ENCODE measurements at regions of chr17 and their contacts with region 1.

Region 1: GRCh38 chr17:7687908-7688807 is at the start of gene WRAP53:
- DNase-seq: peak; percentile 98
- ATAC-seq: peak; percentile 85
- H3K4me3 Mint-ChIP-seq: peak within 1 kb of the TSS; percentile 99
- H3K27ac Mint-ChIP-seq: peak within 1 kb of the TSS; percentile 100
- H3K4me1 Mint-ChIP-seq: peaks cover 25% of the 10 kb centered on the region
- H3K27me3 Mint-ChIP-seq: no peaks in the 10 kb centered on the region
- total RNA-seq, gene WRAP53: 19.3 to 19.4 TPM

Region 2: DNA sequence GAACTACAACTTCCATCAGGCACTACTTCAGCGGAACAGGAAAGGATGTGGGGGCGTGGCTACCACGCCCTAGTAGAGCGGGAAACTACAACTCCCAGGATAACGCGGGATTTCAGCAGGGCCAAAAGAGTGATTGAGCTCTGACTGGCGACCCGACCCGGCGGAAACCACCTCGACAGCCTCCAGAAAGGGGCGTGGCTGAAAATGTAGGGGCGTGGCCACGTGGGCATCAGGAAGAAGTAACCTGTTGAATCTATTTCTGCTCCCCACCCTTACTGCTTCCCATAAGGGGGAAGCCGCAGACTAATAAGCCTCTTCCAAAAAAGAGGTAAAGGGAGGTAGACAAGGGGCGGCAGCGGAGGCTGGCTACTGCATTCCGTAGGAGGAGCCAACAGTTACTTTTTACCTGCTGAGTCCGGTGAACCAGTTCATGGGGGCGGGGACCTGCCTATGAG is 252.9 kb before region 1 on chr17 and contains the start of gene TMEM102:
- POLR2A ChIA-PET with region 1: interaction called, 37 read pairs
- DNase-seq: peak; percentile 98
- ATAC-seq: peak; percentile 65
- H3K4me3 Mint-ChIP-seq: peak within 1 kb of the TSS; percentile 96
- H3K27ac Mint-ChIP-seq: peak within 1 kb of the TSS; percentile 96
- H3K4me1 Mint-ChIP-seq: peaks cover 18% of the 10 kb centered on the region
- H3K27me3 Mint-ChIP-seq: no peaks in the 10 kb centered on the region
- total RNA-seq, gene TMEM102: 15.7 to 17.7 TPM

Region 3: DNA sequence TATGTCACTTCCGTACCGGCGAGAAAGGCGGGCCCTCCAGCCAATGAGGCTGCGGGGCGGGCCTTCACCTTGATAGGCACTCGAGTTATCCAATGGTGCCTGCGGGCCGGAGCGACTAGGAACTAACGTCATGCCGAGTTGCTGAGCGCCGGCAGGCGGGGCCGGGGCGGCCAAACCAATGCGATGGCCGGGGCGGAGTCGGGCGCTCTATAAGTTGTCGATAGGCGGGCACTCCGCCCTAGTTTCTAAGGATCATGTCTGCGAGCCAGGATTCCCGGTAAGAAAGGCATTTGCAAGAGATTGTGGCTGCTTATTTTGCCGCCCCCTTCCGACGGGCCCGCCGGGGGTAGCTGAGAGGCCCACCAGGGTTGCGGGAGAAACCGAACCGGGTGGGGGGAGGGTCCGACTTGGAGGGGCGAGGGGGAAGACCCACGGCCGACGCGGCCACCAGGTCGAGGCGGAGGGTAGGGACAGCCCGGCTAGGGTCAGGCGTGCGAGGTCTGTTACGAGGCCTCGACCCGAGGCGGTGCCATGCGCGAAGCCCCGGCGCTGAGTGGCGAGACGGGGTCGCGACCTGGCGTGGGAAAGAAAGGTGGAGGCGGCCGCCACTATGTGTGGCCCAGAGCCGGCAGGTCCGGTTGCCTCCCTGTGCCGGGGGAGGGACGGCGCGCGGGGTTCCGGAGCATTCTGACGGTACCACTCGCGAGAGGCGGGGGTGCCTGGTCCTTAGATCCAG is 115.4 kb before region 1 on chr17:
- POLR2A ChIA-PET with region 1: interaction called, 27 read pairs
- DNase-seq: peak; percentile 100
- ATAC-seq: peak; percentile 1
- H3K4me3 Mint-ChIP-seq: peak overlapping the region; percentile 96
- H3K27ac Mint-ChIP-seq: peak overlapping the region; percentile 99
- H3K4me1 Mint-ChIP-seq: peaks cover 46% of the 10 kb centered on the region
- H3K27me3 Mint-ChIP-seq: no peaks in the 10 kb centered on the region

Region 4: DNA sequence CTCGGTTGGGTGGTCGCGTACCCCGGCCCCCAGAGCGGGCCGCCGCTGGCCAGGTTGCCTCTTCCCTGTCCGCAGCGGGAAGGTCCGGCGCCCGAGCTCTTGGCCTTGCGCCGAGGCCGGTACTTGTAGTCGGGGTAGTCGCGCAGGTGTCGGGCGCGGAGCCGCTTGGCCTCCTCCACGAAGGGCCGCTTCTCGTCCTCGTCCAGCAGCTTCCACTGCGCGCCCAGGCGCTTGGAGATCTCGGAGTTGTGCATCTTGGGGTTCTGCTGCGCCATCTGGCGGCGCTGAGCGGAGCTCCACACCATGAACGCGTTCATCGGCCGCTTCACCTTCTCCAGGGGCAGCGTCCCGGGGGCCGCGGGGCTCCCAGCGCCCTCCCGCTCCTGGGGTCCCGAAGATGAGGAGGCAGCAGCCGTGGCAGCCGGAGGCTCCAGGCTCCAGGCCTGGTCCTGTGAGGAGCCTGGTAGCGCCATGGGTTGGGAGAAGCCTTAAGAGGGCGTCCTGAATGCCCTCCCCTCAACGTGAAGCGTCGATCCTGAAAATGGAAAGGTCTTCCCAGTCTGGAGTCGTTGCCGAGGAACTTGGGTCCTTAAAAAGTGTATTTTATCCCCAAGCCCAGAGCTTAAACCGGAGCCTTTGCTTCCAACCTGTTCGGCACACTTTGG is 98.8 kb before region 1 on chr17:
- POLR2A ChIA-PET with region 1: interaction called, 57 read pairs
- DNase-seq: peak; percentile 81
- ATAC-seq: peak; percentile 81
- H3K4me3 Mint-ChIP-seq: no peak overlapping the region
- H3K27ac Mint-ChIP-seq: no peak overlapping the region
- H3K4me1 Mint-ChIP-seq: peaks cover 9% of the 10 kb centered on the region
- H3K27me3 Mint-ChIP-seq: no peaks in the 10 kb centered on the region

Region 5: GRCh38 chr17:7627250-7628121 is 60.7 kb before region 1 on chr17 and contains the start of gene SAT2:
- POLR2A ChIA-PET with region 1: interaction called, 50 read pairs
- DNase-seq: peak; percentile 80
- ATAC-seq: peak; percentile 96
- H3K4me3 Mint-ChIP-seq: peak within 1 kb of the TSS; percentile 95
- H3K27ac Mint-ChIP-seq: peak within 1 kb of the TSS; percentile 85
- H3K4me1 Mint-ChIP-seq: peaks cover 14% of the 10 kb centered on the region
- H3K27me3 Mint-ChIP-seq: no peaks in the 10 kb centered on the region
- total RNA-seq, gene SAT2: 40.0 to 41.2 TPM

Region 6: GRCh38 chr17:7650509-7651096 is 37.6 kb before region 1 on chr17 and contains the start of gene ATP1B2:
- POLR2A ChIA-PET with region 1: interaction called, 21 read pairs
- DNase-seq: peak; percentile 71
- ATAC-seq: peak; percentile 86
- H3K4me3 Mint-ChIP-seq: peak within 1 kb of the TSS; percentile 84
- H3K27ac Mint-ChIP-seq: peak within 1 kb of the TSS; percentile 35
- H3K4me1 Mint-ChIP-seq: peaks cover 11% of the 10 kb centered on the region
- H3K27me3 Mint-ChIP-seq: peaks cover 49% of the 10 kb centered on the region
- total RNA-seq, gene ATP1B2: 0.14 to 0.42 TPM

Region 7: GRCh38 chr17:7716901-7717755 is 29.0 kb after region 1 on chr17 and contains the start of gene DNAH2:
- POLR2A ChIA-PET with region 1: interaction called, 28 read pairs
- DNase-seq: peak; percentile 85
- ATAC-seq: peak; percentile 78
- H3K4me3 Mint-ChIP-seq: peak within 1 kb of the TSS; percentile 92
- H3K27ac Mint-ChIP-seq: peak within 1 kb of the TSS; percentile 82
- H3K4me1 Mint-ChIP-seq: peaks cover 38% of the 10 kb centered on the region
- H3K27me3 Mint-ChIP-seq: peaks cover 68% of the 10 kb centered on the region
- total RNA-seq, gene DNAH2: not detected